Esophagus muscularis mucosa (tissue), 4 donors: ENCODE measurements at regions of chr5 and their contacts with region 1.

Region 1: DNA sequence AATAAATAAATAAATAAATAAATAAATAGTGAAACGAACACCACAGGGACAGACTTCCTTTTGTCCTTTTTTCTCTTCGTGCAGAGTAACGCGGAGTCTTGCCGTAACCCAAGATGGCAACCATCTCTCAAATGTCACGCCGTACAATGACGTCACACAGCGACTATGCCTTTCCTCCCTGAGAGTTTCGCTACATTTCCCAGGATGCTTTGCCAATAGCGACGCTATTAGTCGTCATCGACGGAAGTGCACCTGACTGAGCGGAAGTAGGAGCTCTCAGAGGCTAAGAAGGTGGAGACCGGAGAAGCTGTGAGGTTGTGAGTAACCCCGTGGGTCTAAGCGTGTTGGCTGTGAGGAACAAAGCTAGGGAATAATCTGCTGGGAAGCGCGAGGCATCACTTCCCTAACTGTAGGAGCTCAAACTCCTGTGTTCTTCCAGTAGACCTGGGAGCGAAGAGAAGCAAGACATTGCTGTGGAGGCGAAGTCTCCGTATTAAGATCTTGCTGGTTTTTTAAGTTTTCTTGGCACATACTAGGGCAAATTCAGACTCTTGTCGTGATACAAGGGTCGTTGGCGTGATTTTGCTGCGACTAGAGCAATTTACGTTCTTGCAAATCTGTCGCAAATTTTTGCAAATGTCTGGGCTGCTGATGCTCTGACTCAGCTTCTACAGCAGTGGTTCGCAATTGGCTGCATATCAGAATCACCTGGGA is at the start of gene TTC1:
- DNase-seq: peak; percentile 99
- H3K4me3 ChIP-seq: peak within 1 kb of the TSS; percentile 66 to 95 (median 82)
- H3K27ac ChIP-seq: peak within 1 kb of the TSS; percentile 87 to 89 (median 88)
- H3K4me1 ChIP-seq: peaks cover 14 to 28% (median 26%) of the 10 kb centered on the region in 4 donors
- H3K27me3 ChIP-seq: no peaks in the 10 kb centered on the region
- CTCF ChIP-seq: no peak
- EP300 ChIP-seq: no peak
- POLR2A ChIP-seq: peak; percentile 60
- total RNA-seq, gene TTC1: 45.4 to 59.4 (median 49.8) TPM

Region 2: GRCh38 chr5:159163027-159163700 is 845.9 kb before region 1 on chr5:
- intact Hi-C with region 1: loop called (anchors 10 kb)
- DNase-seq: no peak
- H3K4me3 ChIP-seq: no peak overlapping the region
- H3K27ac ChIP-seq: no peak overlapping the region
- H3K4me1 ChIP-seq: peaks cover 0 to 13% (median 0%) of the 10 kb centered on the region in 4 donors
- H3K27me3 ChIP-seq: no peaks in the 10 kb centered on the region
- CTCF ChIP-seq: no peak
- EP300 ChIP-seq: no peak
- POLR2A ChIP-seq: no peak

Region 3: DNA sequence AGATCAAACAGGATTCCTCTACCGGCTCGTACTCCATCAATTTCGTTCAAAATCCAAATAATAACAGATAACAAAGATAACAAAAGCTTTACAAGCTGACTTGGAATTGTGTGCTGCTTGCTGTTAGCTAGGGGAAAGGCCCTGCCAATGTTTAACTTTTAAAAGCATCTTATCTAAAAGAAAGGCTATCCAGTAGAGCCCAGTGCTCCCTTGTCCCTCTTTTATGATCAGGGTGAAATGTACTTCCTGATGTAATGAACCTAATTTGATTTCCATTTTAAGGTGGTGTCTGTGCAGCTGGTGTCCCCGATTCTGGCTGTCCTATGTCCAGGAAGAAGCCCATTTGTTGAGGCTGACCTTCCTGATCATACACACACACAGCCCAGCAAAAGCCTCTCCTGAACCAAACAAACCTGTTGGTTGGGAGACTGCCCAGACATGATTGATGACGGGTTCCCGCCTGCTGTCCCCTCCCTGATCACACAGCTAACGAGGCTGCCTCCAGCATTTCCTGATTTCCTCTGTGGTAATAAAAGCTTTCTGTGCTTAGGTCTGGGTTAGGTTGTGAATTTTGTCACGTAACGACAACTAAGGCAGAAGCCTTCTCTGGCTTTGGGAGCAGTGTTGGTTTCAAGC is 56.1 kb after region 1 on chr5:
- intact Hi-C with region 1: no loop called
- DNase-seq: no peak
- H3K4me3 ChIP-seq: no peak overlapping the region
- H3K27ac ChIP-seq: no peak overlapping the region
- H3K4me1 ChIP-seq: peaks cover 0 to 5% (median 0%) of the 10 kb centered on the region in 4 donors
- H3K27me3 ChIP-seq: no peaks in the 10 kb centered on the region
- CTCF ChIP-seq: no peak
- EP300 ChIP-seq: no peak
- POLR2A ChIP-seq: no peak